ENCODE measurements at regions of chr14 and their contacts with region 1.

Region 1: DNA sequence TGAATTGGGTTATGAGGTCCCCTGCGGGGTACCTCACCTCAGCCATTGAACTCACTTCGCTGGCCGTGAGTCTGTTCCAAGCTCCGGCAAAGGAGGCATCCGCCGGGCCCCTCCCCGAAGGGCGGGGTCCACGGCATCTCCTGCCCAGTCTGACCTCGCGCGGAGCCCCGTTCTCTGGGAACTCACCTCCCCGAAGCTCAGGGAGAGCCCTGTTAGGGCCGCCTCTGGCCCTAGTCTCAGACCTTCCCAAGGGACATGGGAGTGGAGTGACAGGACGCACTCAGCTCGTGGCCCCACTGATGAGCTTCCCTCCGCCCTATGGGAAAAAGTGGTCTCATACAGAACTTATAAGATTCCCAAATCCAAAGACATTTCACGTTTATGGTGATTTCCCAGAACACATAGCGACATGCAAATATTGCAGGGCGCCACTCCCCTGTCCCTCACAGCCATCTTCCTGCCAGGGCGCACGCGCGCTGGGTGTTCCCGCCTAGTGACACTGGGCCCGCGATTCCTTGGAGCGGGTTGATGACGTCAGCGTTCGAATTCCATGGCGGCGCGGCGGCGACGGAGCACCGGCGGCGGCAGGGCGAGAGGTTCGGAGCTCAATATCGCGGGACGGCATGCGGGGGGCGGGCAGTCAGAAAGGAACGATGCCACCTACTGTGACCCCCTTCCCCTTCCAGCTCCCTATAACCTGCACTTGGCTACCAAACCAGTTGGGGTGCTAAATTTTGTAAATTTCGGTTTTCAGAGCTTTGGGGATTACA is at the start of gene PARP2:
- DNase-seq: peak; percentile 87
- ATAC-seq: peak; percentile 87
- H3K4me3 Mint-ChIP-seq: peak within 1 kb of the TSS; percentile 98
- H3K27ac Mint-ChIP-seq: peak within 1 kb of the TSS; percentile 97
- H3K4me1 Mint-ChIP-seq: peaks cover 12% of the 10 kb centered on the region
- H3K27me3 Mint-ChIP-seq: no peaks in the 10 kb centered on the region
- CTCF ChIP-seq: no peak
- total RNA-seq, gene PARP2: 17.1 and 19.5 TPM in 2 replicates

Region 2: GRCh38 chr14:20305265-20306078 is 37.8 kb before region 1 on chr14 and contains the start of gene TTC5:
- CTCF ChIA-PET with region 1: no interaction called
- POLR2A ChIA-PET with region 1: interaction called, 7 read pairs
- intact Hi-C with region 1: loop called (anchors 1 kb)
- DNase-seq: peak; percentile 89
- ATAC-seq: peak; percentile 99
- H3K4me3 Mint-ChIP-seq: peak within 1 kb of the TSS; percentile 87
- H3K27ac Mint-ChIP-seq: peak within 1 kb of the TSS; percentile 81
- H3K4me1 Mint-ChIP-seq: peaks cover 27% of the 10 kb centered on the region
- H3K27me3 Mint-ChIP-seq: no peaks in the 10 kb centered on the region
- CTCF ChIP-seq: no peak
- total RNA-seq, gene TTC5: 25.0 and 32.7 TPM in 2 replicates

Region 3: GRCh38 chr14:20332788-20333493 is 10.3 kb before region 1 on chr14 and contains the start of gene CCNB1IP1:
- CTCF ChIA-PET with region 1: interaction called, 18 read pairs
- POLR2A ChIA-PET with region 1: interaction called, 60 read pairs
- intact Hi-C with region 1: loop called (anchors 1 kb)
- DNase-seq: no peak
- ATAC-seq: peak; percentile 97
- H3K4me3 Mint-ChIP-seq: peak within 1 kb of the TSS; percentile 99
- H3K27ac Mint-ChIP-seq: peak within 1 kb of the TSS; percentile 89
- H3K4me1 Mint-ChIP-seq: peaks cover 29% of the 10 kb centered on the region
- H3K27me3 Mint-ChIP-seq: no peaks in the 10 kb centered on the region
- CTCF ChIP-seq: no peak
- total RNA-seq, gene CCNB1IP1: 34.0 and 35.3 TPM in 2 replicates

Region 4: GRCh38 chr14:20376071-20376588 is 32.9 kb after region 1 on chr14:
- CTCF ChIA-PET with region 1: no interaction called
- POLR2A ChIA-PET with region 1: interaction called, 14 read pairs
- intact Hi-C with region 1: no loop called
- DNase-seq: no peak
- ATAC-seq: no peak
- H3K4me3 Mint-ChIP-seq: no peak overlapping the region
- H3K27ac Mint-ChIP-seq: peak overlapping the region; percentile 6
- H3K4me1 Mint-ChIP-seq: no peaks in the 10 kb centered on the region
- H3K27me3 Mint-ChIP-seq: no peaks in the 10 kb centered on the region
- CTCF ChIP-seq: no peak

Region 5: GRCh38 chr14:20461274-20462001 is 118.2 kb after region 1 on chr14 and contains the start of gene PIP4P1:
- CTCF ChIA-PET with region 1: no interaction called
- POLR2A ChIA-PET with region 1: interaction called, 40 read pairs
- intact Hi-C with region 1: loop called (anchors 1 kb)
- DNase-seq: peak; percentile 94
- ATAC-seq: peak; percentile 86
- H3K4me3 Mint-ChIP-seq: peak within 1 kb of the TSS; percentile 91
- H3K27ac Mint-ChIP-seq: peak within 1 kb of the TSS; percentile 96
- H3K4me1 Mint-ChIP-seq: peaks cover 55% of the 10 kb centered on the region
- H3K27me3 Mint-ChIP-seq: no peaks in the 10 kb centered on the region
- CTCF ChIP-seq: no peak
- total RNA-seq, gene PIP4P1: 84.8 and 87.3 TPM in 2 replicates

Region 6: GRCh38 chr14:20632682-20633428 is 289.6 kb after region 1 on chr14:
- CTCF ChIA-PET with region 1: no interaction called
- POLR2A ChIA-PET with region 1: interaction called, 8 read pairs
- intact Hi-C with region 1: loop called (anchors 1 kb)
- DNase-seq: no peak
- ATAC-seq: peak; percentile 72
- H3K4me3 Mint-ChIP-seq: peak overlapping the region; percentile 82
- H3K27ac Mint-ChIP-seq: peak overlapping the region; percentile 89
- H3K4me1 Mint-ChIP-seq: peaks cover 50% of the 10 kb centered on the region
- H3K27me3 Mint-ChIP-seq: peaks cover 30% of the 10 kb centered on the region
- CTCF ChIP-seq: no peak

Region 7: GRCh38 chr14:20782280-20782890 is 439.1 kb after region 1 on chr14:
- CTCF ChIA-PET with region 1: no interaction called
- POLR2A ChIA-PET with region 1: interaction called, 5 read pairs
- intact Hi-C with region 1: loop called (anchors 5 kb)
- DNase-seq: no peak
- ATAC-seq: peak; percentile 59
- H3K4me3 Mint-ChIP-seq: peak overlapping the region; percentile 86
- H3K27ac Mint-ChIP-seq: peak overlapping the region; percentile 98
- H3K4me1 Mint-ChIP-seq: peaks cover 68% of the 10 kb centered on the region
- H3K27me3 Mint-ChIP-seq: no peaks in the 10 kb centered on the region
- CTCF ChIP-seq: no peak

Region 8: DNA sequence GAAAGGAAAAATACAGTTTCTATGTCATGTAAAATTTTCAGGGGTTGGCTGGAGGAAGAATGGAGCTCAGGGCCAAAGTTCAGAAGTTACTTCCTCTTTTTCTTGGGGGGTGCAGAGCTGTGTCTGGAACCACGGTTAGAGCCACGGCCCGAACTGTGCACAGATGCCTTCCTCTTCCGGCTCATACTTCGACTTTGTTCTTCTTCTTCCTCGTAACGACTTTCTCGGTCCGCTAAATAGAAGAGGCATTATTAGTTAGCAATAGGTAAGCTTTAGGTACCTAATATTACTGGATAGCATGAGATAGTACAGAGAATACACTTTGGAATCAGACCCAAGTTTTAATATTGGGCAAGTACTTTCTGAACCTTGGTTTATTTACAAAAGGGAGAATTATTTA is 1009.3 kb after region 1 on chr14:
- CTCF ChIA-PET with region 1: no interaction called
- POLR2A ChIA-PET with region 1: no interaction called
- intact Hi-C with region 1: no loop called
- DNase-seq: no peak
- ATAC-seq: peak; percentile 94
- H3K4me3 Mint-ChIP-seq: peak overlapping the region; percentile 61
- H3K27ac Mint-ChIP-seq: peak overlapping the region; percentile 87
- H3K4me1 Mint-ChIP-seq: peaks cover 17% of the 10 kb centered on the region
- H3K27me3 Mint-ChIP-seq: no peaks in the 10 kb centered on the region
- CTCF ChIP-seq: no peak

Measured in activated B cell treated with CpG ODN at 0.5 μM for 24 hours (primary cell).